ENCODE measurements at regions of chr1 and their contacts with region 1.

Region 1: DNA sequence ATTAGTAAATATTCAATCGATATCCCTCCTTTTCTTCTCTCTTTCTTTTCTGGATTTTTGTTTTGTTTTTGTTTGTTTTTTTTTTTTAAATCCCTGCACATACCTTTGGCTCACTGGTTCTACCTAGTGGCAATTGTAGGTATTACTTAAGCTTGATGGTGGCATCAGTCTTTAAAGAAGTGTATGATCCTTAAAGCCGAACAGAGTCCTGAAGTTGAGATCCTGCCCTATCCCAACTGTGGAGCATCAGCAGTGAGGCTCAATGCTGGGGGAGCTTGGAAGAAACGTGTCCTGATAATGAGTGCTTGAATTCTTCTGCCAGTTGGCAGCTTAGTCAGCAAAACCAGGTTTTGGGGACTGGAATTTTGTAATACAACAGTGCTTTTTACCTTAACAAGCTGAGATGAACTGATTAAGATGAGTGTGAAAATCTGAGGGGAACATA is 60.8 kb downstream of the FASLG start:
- DNase-seq: no peak
- H3K4me3 Mint-ChIP-seq: no peak overlapping the region
- H3K27ac Mint-ChIP-seq: no peak overlapping the region
- H3K4me1 Mint-ChIP-seq: peaks cover 41% of the 10 kb centered on the region
- H3K27me3 Mint-ChIP-seq: no peaks in the 10 kb centered on the region

Region 2: GRCh38 chr1:172443626-172444453 is 275.9 kb before region 1 on chr1 and contains the start of gene PIGC:
- CTCF ChIA-PET with region 1: interaction called, 36 read pairs
- POLR2A ChIA-PET with region 1: no interaction called
- intact Hi-C with region 1: no loop called
- DNase-seq: peak; percentile 95
- H3K4me3 Mint-ChIP-seq: peak within 1 kb of the TSS; percentile 87
- H3K27ac Mint-ChIP-seq: peak within 1 kb of the TSS; percentile 83
- H3K4me1 Mint-ChIP-seq: peaks cover 38% of the 10 kb centered on the region
- H3K27me3 Mint-ChIP-seq: no peaks in the 10 kb centered on the region
- total RNA-seq, gene PIGC: 16.6 to 17.4 TPM

Region 3: DNA sequence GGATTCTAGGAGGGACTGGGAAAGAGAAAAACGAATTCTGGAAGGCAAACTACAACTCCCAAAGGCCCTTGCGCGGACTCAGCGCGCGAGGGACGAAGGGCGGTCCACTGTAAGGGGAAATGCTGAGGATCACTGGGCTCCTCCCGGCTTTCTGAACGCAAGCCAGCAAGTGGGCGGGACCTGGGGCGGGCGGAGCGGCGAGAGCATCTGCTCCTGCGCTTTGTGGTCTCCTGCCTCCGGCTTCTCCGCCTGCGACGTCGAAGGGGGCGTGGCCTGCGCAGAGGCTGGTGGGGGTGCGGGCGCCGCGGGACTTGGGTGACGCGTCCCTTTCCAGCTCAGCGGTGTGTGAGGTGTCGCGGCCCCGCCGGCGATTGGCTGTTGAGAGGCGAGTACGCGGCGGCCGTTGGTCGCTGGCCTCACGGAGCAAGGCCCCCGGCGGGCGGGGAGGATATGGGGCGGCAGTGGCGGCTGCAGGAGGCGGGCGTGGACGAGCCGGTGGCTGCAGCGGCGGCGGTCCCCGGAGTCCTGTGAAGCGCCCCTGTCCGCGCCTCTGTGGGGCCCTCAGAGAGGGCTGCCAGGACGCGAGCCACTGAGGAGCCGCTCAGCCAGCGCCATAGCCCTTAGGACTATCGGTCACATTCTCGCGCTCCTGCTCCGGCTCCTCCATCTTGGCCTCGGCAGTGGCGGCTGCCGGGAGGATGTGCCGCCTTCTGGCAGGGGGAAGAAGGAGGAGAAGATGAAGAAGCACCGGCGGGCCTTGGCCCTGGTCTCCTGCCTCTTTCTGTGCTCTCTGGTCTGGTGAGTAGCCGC is 186.8 kb before region 1 on chr1 and contains the start of gene SUCO:
- CTCF ChIA-PET with region 1: interaction called, 7 read pairs
- POLR2A ChIA-PET with region 1: no interaction called
- intact Hi-C with region 1: loop called (anchors 2 kb)
- DNase-seq: peak; percentile 100
- H3K4me3 Mint-ChIP-seq: peak within 1 kb of the TSS; percentile 90
- H3K27ac Mint-ChIP-seq: peak within 1 kb of the TSS; percentile 100
- H3K4me1 Mint-ChIP-seq: peaks cover 47% of the 10 kb centered on the region
- H3K27me3 Mint-ChIP-seq: peaks cover 4% of the 10 kb centered on the region
- total RNA-seq, gene SUCO: 18.8 to 20.6 TPM

Region 4: GRCh38 chr1:172609528-172609927 is 110.2 kb before region 1 on chr1:
- CTCF ChIA-PET with region 1: interaction called, 146 read pairs
- POLR2A ChIA-PET with region 1: no interaction called
- intact Hi-C with region 1: loop called (anchors 1 kb)
- DNase-seq: no peak
- H3K4me3 Mint-ChIP-seq: no peak overlapping the region
- H3K27ac Mint-ChIP-seq: no peak overlapping the region
- H3K4me1 Mint-ChIP-seq: peaks cover 6% of the 10 kb centered on the region
- H3K27me3 Mint-ChIP-seq: no peaks in the 10 kb centered on the region

Region 5: GRCh38 chr1:172630056-172630818 is 89.5 kb before region 1 on chr1:
- CTCF ChIA-PET with region 1: interaction called, 78 read pairs
- POLR2A ChIA-PET with region 1: no interaction called
- intact Hi-C with region 1: no loop called
- DNase-seq: no peak
- H3K4me3 Mint-ChIP-seq: no peak overlapping the region
- H3K27ac Mint-ChIP-seq: no peak overlapping the region
- H3K4me1 Mint-ChIP-seq: peaks cover 49% of the 10 kb centered on the region
- H3K27me3 Mint-ChIP-seq: peaks cover 8% of the 10 kb centered on the region

Region 6: DNA sequence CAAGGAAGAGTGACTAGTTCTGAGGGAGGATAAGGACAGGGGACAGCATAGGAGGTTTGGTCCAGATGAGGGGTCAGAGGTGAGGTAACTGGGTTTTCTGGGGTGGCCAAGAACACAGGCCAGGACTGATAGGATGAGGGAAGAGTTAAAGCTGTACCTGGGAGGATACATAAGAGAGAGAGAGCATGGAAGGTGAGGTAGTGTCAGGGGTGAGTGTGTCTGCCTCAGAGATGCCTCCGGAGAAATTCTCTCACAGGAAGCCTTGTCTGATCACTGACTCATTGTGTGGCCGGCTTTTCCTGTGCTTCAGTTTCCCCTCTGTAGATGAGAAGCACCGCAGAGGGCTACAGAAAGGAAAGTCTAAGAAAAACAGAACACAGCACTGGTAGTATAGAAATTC is 20.6 kb before region 1 on chr1:
- CTCF ChIA-PET with region 1: interaction called, 10 read pairs
- POLR2A ChIA-PET with region 1: interaction called, 3 read pairs
- intact Hi-C with region 1: loop called (anchors 2 kb)
- DNase-seq: peak; percentile 86
- H3K4me3 Mint-ChIP-seq: peak overlapping the region; percentile 14
- H3K27ac Mint-ChIP-seq: peak overlapping the region; percentile 88
- H3K4me1 Mint-ChIP-seq: peaks cover 50% of the 10 kb centered on the region
- H3K27me3 Mint-ChIP-seq: no peaks in the 10 kb centered on the region

Measured in activated CD4-positive, alpha-beta memory T cell treated with anti-CD3 and anti-CD28 coated beads for 36 hours (primary cell).